ENCODE measurements at regions of chr14 and their contacts with region 1.

Region 1: DNA sequence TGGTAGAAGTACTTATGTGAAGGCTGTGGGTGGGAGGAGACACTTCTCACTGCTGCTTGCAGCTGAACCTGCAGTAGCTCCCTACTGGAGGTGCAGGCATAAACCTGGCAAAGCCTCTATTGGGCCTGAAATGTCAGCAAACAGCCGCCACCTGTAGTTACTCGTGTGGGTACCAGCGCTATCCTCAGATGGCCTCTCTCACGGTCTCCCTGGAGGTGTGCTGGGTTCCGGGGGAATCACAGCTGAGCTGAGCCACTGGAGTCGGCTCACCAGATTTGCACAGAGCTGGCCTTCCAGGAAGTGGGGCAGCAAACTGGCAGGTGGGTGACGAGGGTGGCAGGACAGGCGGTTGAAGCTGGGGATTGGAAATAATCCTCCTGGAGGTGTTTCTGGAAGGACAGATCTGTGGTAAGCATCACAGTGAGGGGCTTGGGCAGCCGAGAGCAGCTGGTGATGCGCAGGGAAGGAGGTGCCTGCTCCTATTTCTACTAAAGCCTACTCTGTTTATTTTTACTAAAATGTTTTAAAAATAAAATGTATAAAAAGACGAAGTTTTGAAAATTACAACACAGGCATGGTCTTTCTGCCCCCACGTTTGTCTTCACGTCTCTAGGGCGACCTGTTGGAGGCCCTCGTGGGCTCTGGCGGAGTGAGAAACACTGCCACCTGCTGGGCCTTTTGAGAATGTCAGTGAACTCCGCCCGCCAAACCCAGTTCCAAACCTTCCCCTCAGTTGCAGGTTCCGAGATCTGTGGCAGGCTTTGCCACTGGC is 67.8 kb upstream of the PLEKHG3 start:
- DNase-seq: peak; percentile 51 to 80
- H3K4me3 ChIP-seq: no peak overlapping the region
- H3K4me1 ChIP-seq: no peaks in the 10 kb centered on the region; the same call in 1 of the 2 replicates
- H3K27me3 ChIP-seq: no peaks in the 10 kb centered on the region

Region 2: DNA sequence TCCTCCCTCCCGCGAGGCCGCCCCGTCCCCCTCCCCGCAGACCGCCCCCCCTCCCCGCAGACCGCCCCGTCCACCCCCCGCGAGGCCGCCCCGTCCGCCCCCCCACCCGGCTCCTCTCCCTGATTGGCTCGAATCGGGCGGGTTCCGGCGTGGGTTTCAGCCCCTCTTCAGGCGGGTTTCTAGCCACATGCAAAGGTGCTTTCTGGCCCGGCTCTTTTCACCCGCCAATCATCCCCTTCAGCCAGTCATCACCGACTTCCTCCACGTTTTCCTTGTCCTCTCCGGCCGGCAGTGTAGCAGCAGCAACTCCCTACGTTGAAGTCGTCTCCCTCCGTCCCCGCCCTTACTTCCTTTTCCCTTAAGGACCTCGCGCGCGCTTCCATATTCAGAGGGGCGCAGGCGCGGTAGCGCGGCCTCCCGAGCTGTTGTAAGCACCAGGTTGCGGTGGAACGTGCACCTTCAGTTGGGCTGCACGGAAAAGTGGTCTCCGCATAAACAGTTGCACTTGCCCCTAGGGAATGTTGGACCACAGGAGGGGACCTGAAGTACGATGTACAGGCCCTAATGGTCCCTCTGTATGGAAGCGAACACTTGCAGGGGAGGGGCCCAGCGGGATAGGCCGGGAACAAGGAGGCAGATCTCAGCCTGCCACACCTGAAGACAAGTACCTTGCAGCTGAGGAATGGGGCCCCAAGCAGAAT is 297.6 kb before region 1 on chr14:
- in situ Hi-C with region 1: loop called (anchors 10 kb)
- DNase-seq: peak; percentile 97 to 100
- H3K4me3 ChIP-seq: peak overlapping the region; percentile 60
- H3K4me1 ChIP-seq: peaks cover 9% of the 10 kb centered on the region
- H3K27me3 ChIP-seq: no peaks in the 10 kb centered on the region

Measured in HAP-1 (cell line).